Dorsolateral prefrontal cortex (tissue), 120 donors: ENCODE measurements at regions of chr19 and their contacts with region 1.

Region 1: GRCh38 chr19:34134190-34135053 is 37.9 kb upstream of the LSM14A start:
- DNase-seq: peak; percentile 46 to 87 (median 65)
- H3K4me3 ChIP-seq: peak overlapping the region; percentile 53 to 92 (median 80)
- H3K27ac ChIP-seq: peak overlapping the region in 57 of 59 donors; percentile 6 to 92 (median 76)
- H3K27me3 ChIP-seq: no peaks in the 10 kb centered on the region
- CTCF ChIP-seq: peak in 25 of 56 donors; percentile 5 to 50 (median 29)

Region 2: DNA sequence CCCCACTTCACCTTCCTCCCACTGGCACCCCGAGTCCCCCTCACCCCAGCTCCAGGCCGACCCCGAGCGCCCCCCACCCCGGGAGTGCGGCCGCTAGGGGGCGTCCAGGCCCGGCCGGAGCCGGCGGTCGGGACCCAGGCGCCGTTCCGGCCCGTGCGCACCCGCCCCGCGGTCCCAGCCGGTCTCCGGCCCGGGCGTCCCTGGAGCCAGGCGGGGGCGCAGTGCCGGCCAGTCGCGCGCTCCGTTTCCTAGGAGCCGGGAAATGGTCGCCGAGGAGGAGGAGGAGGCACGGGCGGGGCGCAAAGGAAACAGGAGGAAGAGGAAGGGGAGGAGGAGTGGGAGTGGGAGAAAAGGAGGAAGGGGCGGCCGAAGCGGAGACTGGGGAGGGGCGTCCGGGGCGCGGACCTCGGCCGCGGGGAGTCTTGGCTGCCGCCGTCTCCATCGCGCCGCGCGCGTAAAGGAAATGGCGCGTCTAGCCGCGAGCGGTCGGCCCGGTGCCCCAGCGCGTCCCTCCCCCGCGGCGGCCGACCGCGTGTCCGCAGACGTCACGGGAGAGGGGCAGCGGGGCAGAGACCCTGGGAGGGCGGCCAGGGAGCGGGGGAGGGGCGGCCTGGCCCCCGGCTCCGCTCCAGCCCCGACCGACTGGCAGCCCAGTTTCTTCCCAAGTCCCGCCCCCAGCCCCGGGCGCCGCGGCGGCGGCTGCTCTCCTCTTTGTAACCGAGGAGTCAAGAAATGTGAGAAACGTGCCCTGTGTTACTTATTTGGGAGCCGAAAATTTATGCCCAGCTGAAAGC is 338.9 kb before region 1 on chr19:
- intact Hi-C with region 1: loop called in 1 of 2 experiments (anchors 10 kb)
- DNase-seq: peak in 6 of 10 donors; percentile 38 to 77 (median 60)
- H3K4me3 ChIP-seq: peak overlapping the region; percentile 45 to 81 (median 69)
- H3K27ac ChIP-seq: peak overlapping the region in 57 of 59 donors; percentile 43 to 94 (median 85)
- H3K27me3 ChIP-seq: peaks cover 0 to 31% (median 0%) of the 10 kb centered on the region in 45 donors
- CTCF ChIP-seq: peak in 54 of 56 donors; percentile 6 to 92 (median 70)

Region 3: DNA sequence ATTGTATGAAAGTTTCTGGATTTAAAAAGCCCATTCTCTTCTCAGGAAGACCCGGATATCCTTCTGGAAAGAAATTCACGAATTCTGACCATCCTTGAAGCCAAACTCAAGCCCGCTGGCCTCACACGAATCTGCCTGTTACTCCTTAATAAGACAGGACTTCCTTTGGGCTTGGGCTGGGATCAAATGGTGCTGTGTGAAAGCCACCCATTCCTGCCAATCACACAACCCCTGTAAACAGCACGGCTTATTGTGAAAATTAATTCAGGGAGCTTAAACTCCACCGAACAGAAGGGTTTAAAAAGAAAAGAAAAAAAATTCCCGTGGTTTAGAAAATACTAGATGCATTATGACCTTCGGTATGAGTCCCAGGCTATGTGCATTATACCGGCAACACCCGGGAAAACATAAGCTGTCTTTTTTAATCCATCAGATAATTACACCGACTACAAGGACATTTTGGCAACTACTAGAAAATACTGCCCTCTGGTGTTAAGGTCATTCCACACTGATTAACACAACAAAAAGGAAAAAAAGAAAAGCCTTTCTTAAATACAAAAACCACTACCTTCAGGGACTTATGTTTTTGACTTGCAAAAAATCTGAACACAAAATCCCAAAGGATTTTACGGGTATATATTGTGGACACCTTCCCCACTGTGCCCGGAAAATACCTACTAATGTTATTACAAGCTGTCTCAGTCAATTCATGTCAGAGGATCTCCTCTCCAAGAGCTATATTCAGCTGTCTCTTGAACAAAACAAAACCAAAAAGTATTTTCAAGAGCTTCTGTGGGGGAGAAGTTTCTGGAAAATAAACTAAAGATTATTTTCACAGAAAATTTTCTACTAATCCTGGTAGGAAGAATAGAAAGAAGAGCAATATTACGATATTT is 38.2 kb before region 1 on chr19:
- intact Hi-C with region 1: no loop called
- DNase-seq: peak in 2 of 10 donors; percentile 15 to 36
- H3K4me3 ChIP-seq: peak overlapping the region in 43 of 59 donors; percentile 3 to 52 (median 33)
- H3K27ac ChIP-seq: no peak overlapping the region
- H3K27me3 ChIP-seq: no peaks in the 10 kb centered on the region
- CTCF ChIP-seq: peak; percentile 50 to 88 (median 70)

Region 4: DNA sequence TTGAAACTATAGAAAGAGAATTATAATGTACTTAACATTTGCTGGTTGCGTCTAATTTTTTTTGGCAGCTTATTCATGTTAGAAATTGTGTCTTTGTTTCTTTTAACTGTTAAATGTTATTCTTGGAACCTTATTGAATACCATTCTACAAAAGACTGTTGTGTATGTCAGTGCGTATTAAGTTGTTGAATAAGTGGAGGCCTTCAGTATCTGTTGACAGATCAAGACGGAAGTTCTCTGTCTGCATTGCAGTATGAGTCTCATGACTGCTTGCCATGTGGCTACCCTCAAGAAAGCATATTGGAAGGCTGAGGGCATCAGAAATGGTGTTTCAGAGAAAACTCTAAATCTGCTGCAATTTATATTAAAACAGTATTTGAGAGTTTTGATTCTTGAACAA is 302.3 kb after region 1 on chr19:
- intact Hi-C with region 1: no loop called
- DNase-seq: no peak
- H3K4me3 ChIP-seq: no peak overlapping the region
- H3K27ac ChIP-seq: peak overlapping the region in 5 of 59 donors; percentile 30 to 57 (median 32)
- H3K27me3 ChIP-seq: no peaks in the 10 kb centered on the region
- CTCF ChIP-seq: no peak